ENCODE measurements at regions of chr1 and their contacts with region 1.

Region 1: GRCh38 chr1:227999056-227999930 is 7.5 kb upstream of the WNT3A start:
- DNase-seq: peak; percentile 80 to 91
- H3K4me3 ChIP-seq: no peak overlapping the region
- H3K27ac ChIP-seq: no peak overlapping the region
- H3K4me1 ChIP-seq: no peaks in the 10 kb centered on the region
- H3K27me3 ChIP-seq: no peaks in the 10 kb centered on the region
- CTCF ChIP-seq: peak; percentile 93

Region 2: GRCh38 chr1:227924833-227925574 is 74.3 kb before region 1 on chr1:
- CTCF ChIA-PET with region 1: no interaction called
- POLR2A ChIA-PET with region 1: no interaction called
- intact Hi-C with region 1: no loop called
- DNase-seq: no peak
- H3K4me3 ChIP-seq: no peak overlapping the region
- H3K27ac ChIP-seq: no peak overlapping the region
- H3K4me1 ChIP-seq: no peaks in the 10 kb centered on the region
- H3K27me3 ChIP-seq: no peaks in the 10 kb centered on the region
- CTCF ChIP-seq: no peak

Region 3: GRCh38 chr1:228165372-228166169 is 166.3 kb after region 1 on chr1 and contains the start of gene IBA57:
- CTCF ChIA-PET with region 1: interaction called, 6 read pairs
- POLR2A ChIA-PET with region 1: no interaction called
- intact Hi-C with region 1: loop called (anchors 1 kb)
- DNase-seq: peak; percentile 93 to 100
- H3K4me3 ChIP-seq: peak within 1 kb of the TSS; percentile 88
- H3K27ac ChIP-seq: peak within 1 kb of the TSS; percentile 89
- H3K4me1 ChIP-seq: peaks cover 13% of the 10 kb centered on the region
- H3K27me3 ChIP-seq: no peaks in the 10 kb centered on the region
- CTCF ChIP-seq: peak; percentile 79
- total RNA-seq, gene IBA57: 7.8 and 13.8 TPM in 2 replicates

Region 4: GRCh38 chr1:228236744-228237143 is 237.5 kb after region 1 on chr1:
- CTCF ChIA-PET with region 1: interaction called, 11 read pairs
- POLR2A ChIA-PET with region 1: no interaction called
- intact Hi-C with region 1: no loop called
- DNase-seq: peak in 1 of 2 experiments; percentile 49
- H3K4me3 ChIP-seq: no peak overlapping the region
- H3K27ac ChIP-seq: no peak overlapping the region
- H3K4me1 ChIP-seq: no peaks in the 10 kb centered on the region
- H3K27me3 ChIP-seq: no peaks in the 10 kb centered on the region
- CTCF ChIP-seq: peak; percentile 63

Region 5: DNA sequence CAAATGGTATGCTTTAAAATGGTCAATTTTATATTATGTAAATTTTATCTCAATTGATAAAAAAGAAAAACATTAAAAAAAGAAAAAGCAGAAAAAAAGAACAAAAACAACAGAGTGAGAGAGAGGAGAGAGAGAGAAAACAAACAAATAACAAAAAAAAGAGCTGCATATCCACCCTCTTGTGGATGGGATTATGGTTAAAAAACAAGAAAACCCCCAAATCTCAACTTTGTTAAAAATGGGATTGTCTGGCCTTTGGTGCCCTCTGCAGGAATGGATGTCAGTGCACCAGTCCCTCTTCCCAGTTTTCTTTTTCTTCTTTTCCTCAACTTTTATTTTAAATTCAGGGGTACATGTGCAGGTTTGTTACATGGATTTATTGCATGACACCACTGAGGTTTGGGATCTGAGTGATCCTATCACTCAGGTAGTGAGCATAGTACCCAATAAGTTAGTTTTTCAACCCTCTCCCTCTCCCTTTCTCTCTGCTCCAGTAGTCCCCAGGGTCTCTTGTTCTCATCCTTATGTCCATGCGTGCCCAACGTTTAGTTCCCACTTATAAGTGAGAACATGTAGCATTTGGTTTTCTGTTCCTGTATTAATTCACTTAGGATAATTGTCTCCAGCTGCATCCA is 516.0 kb after region 1 on chr1:
- CTCF ChIA-PET with region 1: no interaction called
- POLR2A ChIA-PET with region 1: interaction called, 4 read pairs
- intact Hi-C with region 1: loop called (anchors 1 kb)
- DNase-seq: peak in 1 of 2 experiments; percentile 46
- H3K4me3 ChIP-seq: no peak overlapping the region
- H3K27ac ChIP-seq: no peak overlapping the region
- H3K4me1 ChIP-seq: no peaks in the 10 kb centered on the region
- H3K27me3 ChIP-seq: peaks cover 27% of the 10 kb centered on the region
- CTCF ChIP-seq: peak; percentile 87

Measured in PC-9 (cell line).